ENCODE measurements at regions of chr18 and their contacts with region 1.

Region 1: DNA sequence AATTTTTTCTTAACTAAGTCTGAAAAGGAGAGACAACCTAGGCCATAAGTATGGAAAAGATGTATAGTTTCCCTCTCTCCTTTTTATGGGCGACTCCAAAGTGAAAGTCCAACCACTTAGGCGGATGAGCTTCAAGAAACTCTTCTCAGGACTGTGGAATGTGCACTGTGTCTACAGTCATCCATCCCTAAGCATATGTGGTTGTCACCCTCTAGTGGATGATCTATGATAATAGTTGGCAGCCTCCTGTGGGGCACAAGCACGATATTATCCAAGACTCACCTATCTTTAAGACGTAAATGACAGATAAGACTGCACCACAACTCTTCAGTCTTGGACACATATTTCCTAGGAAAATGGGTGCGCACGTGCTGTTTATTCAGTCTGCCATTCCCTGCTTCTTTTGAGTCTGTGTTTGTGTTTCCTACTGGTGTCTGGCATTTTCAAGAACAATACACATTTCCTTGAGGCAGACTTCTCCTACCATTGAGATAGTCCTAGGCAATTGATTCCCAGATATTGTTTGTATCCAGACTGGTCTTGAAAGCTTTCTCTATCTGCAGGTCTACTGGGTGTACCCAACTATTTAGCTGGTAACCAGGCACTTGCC is 145.5 kb upstream of the CTAGE1 start:
- DNase-seq: peak; percentile 71

Region 2: GRCh38 chr18:22214731-22215528 is 348.3 kb before region 1 on chr18:
- in situ Hi-C with region 1: loop called (anchors 10 kb)
- DNase-seq: peak; percentile 15